ENCODE measurements at regions of chr3 and their contacts with region 1.

Region 1: DNA sequence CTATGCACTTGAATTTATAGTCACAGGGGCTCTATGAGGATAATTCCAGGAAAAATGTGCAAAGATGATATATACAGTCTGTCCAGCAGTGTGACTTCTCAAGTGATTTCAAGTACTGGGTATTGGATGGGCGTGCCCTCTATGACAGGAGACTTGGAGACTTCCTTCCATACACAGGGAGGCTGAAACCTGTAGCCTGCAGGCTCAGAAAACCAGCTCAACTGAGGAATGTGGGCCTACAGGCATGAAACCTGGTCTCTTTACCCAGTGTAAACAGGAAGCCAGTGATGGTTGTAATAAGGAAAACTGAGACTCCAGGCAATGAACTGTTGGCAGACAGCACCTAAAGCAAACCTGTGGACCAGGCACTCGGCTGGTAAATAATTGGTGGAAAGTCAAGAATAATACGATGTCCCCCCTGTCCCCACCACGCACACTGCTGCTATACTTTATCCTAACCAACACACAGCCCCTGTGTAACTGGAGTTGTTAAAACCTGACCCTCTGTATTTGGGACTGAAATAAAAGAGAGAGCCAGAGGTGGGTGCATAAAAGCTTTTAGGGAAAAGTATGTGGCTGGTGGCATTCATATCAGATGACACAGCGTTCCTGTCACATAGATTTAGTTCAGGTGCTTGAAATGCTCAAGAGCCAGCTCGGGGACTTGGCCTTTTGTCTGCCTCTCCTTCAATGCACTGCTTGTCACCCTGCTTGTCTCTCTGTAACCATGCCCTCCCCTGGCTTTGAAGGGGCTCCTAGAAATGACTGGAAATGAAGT is 144.7 kb downstream of the TPRG1 start:
- DNase-seq: peak; percentile 80 to 84
- H3K4me3 ChIP-seq: no peak overlapping the region
- H3K4me3 Mint-ChIP-seq: no peak overlapping the region
- H3K27ac Mint-ChIP-seq: peak overlapping the region; percentile 87
- H3K4me1 ChIP-seq: peaks cover 20% of the 10 kb centered on the region; the same call in 1 of the 2 replicates
- H3K4me1 Mint-ChIP-seq: peaks cover 11% of the 10 kb centered on the region
- H3K27me3 ChIP-seq: no peaks in the 10 kb centered on the region
- H3K27me3 Mint-ChIP-seq: no peaks in the 10 kb centered on the region
- CTCF ChIP-seq: no peak

Region 2: DNA sequence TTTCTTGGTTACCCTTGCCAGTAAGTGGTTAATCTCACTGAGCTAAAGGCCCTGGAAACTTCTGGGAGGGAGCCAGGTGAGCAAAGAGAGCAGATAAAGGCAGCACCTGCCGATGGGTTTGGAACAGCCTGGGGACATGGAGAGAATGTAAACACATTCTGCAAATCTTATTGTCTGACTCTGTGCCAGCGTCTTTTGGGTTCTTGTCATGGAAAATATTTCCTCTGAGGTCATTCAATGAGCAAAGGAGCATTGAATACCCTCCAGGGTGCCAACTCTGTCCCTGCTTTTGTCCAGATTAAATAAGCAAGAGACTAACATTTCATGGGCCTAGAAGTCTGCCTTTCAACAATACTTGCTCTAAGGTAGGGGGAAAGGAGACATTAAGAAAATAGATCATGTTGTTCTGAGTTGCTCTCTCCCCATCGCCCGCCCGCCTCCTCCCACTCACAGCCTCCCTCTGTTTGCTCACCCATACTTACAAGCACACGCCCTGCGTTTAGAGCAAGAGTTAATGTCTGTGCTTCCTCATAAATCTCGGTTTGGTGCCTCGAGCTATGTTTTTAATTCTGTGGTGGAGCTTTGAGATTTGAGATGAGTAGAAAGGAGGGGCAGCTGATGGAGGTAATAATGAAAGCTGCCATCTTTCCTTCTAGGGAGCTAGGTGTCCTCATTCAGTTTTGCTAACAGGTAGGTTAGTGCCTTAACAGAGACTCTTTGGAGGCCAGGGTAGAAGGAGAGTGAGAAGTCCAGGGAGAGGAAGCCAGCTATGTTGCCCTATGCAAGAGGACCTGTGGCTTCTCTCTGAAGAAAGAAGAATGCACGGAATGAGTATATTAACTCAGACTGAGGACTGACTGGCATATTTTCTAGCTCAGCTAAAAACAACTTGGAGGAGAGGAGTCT is 11.7 kb before region 1 on chr3:
- CTCF ChIA-PET with region 1: interaction called, 3 read pairs
- POLR2A ChIA-PET with region 1: no interaction called
- intact Hi-C with region 1: loop called (anchors 1 kb)
- DNase-seq: peak; percentile 72 to 77
- H3K4me3 ChIP-seq: no peak overlapping the region
- H3K4me3 Mint-ChIP-seq: peak overlapping the region; percentile 56
- H3K27ac Mint-ChIP-seq: peak overlapping the region; percentile 91
- H3K4me1 ChIP-seq: peaks cover 24% of the 10 kb centered on the region
- H3K4me1 Mint-ChIP-seq: peaks cover 21% of the 10 kb centered on the region
- H3K27me3 ChIP-seq: no peaks in the 10 kb centered on the region
- H3K27me3 Mint-ChIP-seq: no peaks in the 10 kb centered on the region
- CTCF ChIP-seq: no peak

Region 3: GRCh38 chr3:189355481-189356201 is 39.2 kb after region 1 on chr3:
- CTCF ChIA-PET with region 1: no interaction called
- POLR2A ChIA-PET with region 1: no interaction called
- intact Hi-C with region 1: loop called (anchors 2 kb)
- DNase-seq: peak; percentile 49 to 62
- H3K4me3 ChIP-seq: no peak overlapping the region
- H3K4me3 Mint-ChIP-seq: no peak overlapping the region
- H3K27ac Mint-ChIP-seq: peak overlapping the region; percentile 86
- H3K4me1 ChIP-seq: peaks cover 38% of the 10 kb centered on the region
- H3K4me1 Mint-ChIP-seq: peaks cover 19% of the 10 kb centered on the region
- H3K27me3 ChIP-seq: no peaks in the 10 kb centered on the region
- H3K27me3 Mint-ChIP-seq: no peaks in the 10 kb centered on the region
- CTCF ChIP-seq: no peak